PC-9 (cell line): ENCODE measurements at regions of chr15 and their contacts with region 1.

Region 1: DNA sequence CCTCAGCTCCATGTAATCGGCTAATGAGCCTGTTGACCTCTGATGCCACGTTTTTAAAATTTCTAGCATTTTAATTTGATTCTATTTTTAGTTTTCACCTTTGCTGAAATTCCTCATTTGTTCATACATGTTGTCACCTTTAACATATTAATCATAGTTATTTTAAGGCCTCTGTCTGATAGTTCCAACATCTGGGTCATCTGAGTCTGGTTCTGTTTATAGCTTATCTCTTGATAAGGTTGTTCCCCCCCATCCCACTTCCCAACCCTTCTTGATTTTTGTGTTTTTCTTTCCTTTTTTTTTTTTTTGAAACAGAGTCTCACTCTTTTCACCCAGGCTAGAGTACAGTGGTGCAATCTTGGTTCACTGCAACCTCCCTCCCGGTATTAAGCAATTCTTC is 36.4 kb downstream of the MAP2K1 start:
- DNase-seq: no peak
- H3K4me3 ChIP-seq: no peak overlapping the region
- H3K27ac ChIP-seq: no peak overlapping the region
- H3K4me1 ChIP-seq: no peaks in the 10 kb centered on the region
- H3K27me3 ChIP-seq: no peaks in the 10 kb centered on the region
- CTCF ChIP-seq: no peak

Region 2: DNA sequence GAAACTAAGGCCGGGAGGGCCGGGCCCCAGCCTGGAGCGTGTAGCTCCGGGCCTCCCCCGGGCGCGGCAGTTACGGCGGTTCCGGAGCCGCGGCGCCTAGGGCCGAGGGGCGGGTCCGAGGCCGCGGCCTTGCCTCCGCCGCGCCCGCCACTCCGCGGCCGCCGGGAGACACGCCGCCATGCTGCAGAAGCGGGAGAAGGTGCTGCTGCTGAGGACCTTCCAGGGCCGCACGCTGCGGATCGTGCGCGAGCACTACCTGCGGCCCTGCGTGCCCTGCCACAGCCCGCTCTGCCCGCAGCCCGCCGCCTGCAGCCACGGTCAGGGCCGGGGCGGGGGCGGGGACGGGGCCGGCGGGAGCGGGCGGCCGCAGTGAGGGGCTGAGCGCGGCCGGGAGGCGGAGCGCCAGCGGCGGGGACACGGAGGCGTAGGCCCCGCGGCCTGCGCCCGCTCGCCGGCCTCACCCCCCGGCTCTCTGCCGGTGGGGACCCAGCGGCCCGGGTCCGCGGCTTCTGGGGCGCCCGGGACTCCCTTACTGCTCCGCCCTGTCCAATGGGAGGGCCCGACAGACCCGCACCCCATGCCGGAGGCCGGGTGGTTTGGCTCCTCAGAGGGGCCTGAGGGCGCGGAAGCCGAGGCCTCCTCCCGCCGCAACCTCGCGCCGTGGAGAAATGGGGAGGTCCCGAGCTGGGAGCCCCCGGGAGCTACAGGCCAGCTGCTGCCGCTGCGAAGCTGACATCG is 129.6 kb before region 1 on chr15 and contains the start of gene DIS3L:
- CTCF ChIA-PET with region 1: no interaction called
- POLR2A ChIA-PET with region 1: no interaction called
- intact Hi-C with region 1: no loop called
- DNase-seq: peak in 1 of 2 experiments; percentile 52
- H3K4me3 ChIP-seq: peak within 1 kb of the TSS; percentile 52
- H3K27ac ChIP-seq: peak within 1 kb of the TSS; percentile 57
- H3K4me1 ChIP-seq: peaks cover 28% of the 10 kb centered on the region
- H3K27me3 ChIP-seq: no peaks in the 10 kb centered on the region
- CTCF ChIP-seq: no peak
- total RNA-seq, gene DIS3L: 27.7 and 31.2 TPM in 2 replicates

Region 3: DNA sequence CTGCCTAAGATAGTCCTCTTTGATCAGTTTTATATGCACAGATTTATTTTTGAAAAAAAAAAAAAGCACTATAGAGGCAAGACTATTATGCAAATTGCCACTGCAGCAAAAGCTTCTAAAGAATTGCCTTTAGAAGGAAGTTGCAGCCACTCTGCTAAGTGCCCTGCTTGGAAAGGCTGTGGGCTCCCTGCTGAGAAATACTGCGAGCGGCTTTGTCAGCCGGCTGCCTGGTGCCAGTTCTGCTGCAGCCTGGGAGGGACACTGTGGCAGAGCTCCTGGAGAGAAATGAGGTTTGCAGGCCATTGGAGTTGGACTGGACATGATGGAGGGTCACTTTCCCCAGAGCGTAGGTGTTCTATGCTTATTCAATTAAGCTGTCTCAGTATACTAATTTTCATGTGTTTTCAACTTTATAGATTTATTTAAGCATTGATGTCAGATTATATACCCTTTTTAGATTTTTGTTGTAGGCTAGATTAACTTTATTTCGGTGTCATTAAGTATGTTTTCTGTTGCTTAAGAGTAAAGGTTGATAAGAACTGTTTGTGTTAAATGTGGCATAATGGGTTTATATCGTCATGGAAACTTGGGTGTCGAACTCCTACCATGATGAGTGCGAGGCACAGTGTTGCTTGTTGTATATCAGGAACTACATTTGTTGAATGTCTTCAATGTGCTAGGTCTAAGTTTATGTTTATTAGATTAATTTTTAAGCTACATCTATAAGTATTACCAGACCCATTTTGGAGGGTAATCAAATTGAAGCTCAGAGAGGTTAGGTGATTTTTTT is 1125.9 kb after region 1 on chr15:
- CTCF ChIA-PET with region 1: interaction called, 11 read pairs
- POLR2A ChIA-PET with region 1: no interaction called
- intact Hi-C with region 1: no loop called
- DNase-seq: no peak
- H3K4me3 ChIP-seq: no peak overlapping the region
- H3K27ac ChIP-seq: no peak overlapping the region
- H3K4me1 ChIP-seq: no peaks in the 10 kb centered on the region
- H3K27me3 ChIP-seq: no peaks in the 10 kb centered on the region
- CTCF ChIP-seq: no peak